IMR-90 (cell line): ENCODE measurements at regions of chr1 and their contacts with region 1.

Region 1: GRCh38 chr1:190464690-190465089 is 13.0 kb downstream of the BRINP3 start:
- DNase-seq: no peak
- ATAC-seq: no peak
- H3K4me3 ChIP-seq: no peak overlapping the region
- H3K27ac ChIP-seq: no peak overlapping the region
- H3K4me1 ChIP-seq: no peaks in the 10 kb centered on the region
- H3K27me3 ChIP-seq: no peaks in the 10 kb centered on the region
- CTCF ChIP-seq: no peak
- POLR2A ChIP-seq: no peak
- RAD21 ChIP-seq: no peak

Region 2: GRCh38 chr1:190353538-190354101 is 111.1 kb before region 1 on chr1:
- CTCF ChIA-PET with region 1: no interaction called
- POLR2A ChIA-PET with region 1: no interaction called
- dilution Hi-C with region 1: no loop called
- in situ Hi-C with region 1: no loop called
- intact Hi-C with region 1: no loop called
- DNase-seq: peak; percentile 69
- ATAC-seq: no peak
- H3K4me3 ChIP-seq: peak overlapping the region; percentile 23; the same call in 1 of the 2 replicates
- H3K27ac ChIP-seq: no peak overlapping the region
- H3K4me1 ChIP-seq: no peaks in the 10 kb centered on the region
- H3K27me3 ChIP-seq: no peaks in the 10 kb centered on the region
- CTCF ChIP-seq: no peak
- POLR2A ChIP-seq: no peak
- RAD21 ChIP-seq: no peak

Region 3: GRCh38 chr1:190511554-190511953 is 46.9 kb after region 1 on chr1:
- CTCF ChIA-PET with region 1: no interaction called
- POLR2A ChIA-PET with region 1: no interaction called
- dilution Hi-C with region 1: no loop called
- in situ Hi-C with region 1: no loop called
- intact Hi-C with region 1: loop called (anchors 5 kb)
- DNase-seq: no peak
- ATAC-seq: no peak
- H3K4me3 ChIP-seq: no peak overlapping the region
- H3K27ac ChIP-seq: no peak overlapping the region
- H3K4me1 ChIP-seq: no peaks in the 10 kb centered on the region
- H3K27me3 ChIP-seq: no peaks in the 10 kb centered on the region
- CTCF ChIP-seq: no peak
- POLR2A ChIP-seq: no peak
- RAD21 ChIP-seq: no peak

Region 4: GRCh38 chr1:191026828-191027227 is 562.1 kb after region 1 on chr1:
- CTCF ChIA-PET with region 1: no interaction called
- POLR2A ChIA-PET with region 1: no interaction called
- dilution Hi-C with region 1: no loop called
- in situ Hi-C with region 1: no loop called
- intact Hi-C with region 1: no loop called
- DNase-seq: no peak
- ATAC-seq: no peak
- H3K4me3 ChIP-seq: no peak overlapping the region
- H3K27ac ChIP-seq: no peak overlapping the region
- H3K4me1 ChIP-seq: no peaks in the 10 kb centered on the region
- H3K27me3 ChIP-seq: no peaks in the 10 kb centered on the region
- CTCF ChIP-seq: no peak
- POLR2A ChIP-seq: no peak
- RAD21 ChIP-seq: no peak